ENCODE measurements at regions of chr14 and their contacts with region 1.

Region 1: GRCh38 chr14:54347997-54348611 is 48.7 kb upstream of the CDKN3 start:
- DNase-seq: peak; percentile 63
- CTCF ChIP-seq: peak; percentile 64

Region 2: GRCh38 chr14:53295985-53296582 is 1052.0 kb before region 1 on chr14:
- CTCF ChIA-PET with region 1: interaction called, 19 read pairs
- POLR2A ChIA-PET with region 1: no interaction called
- DNase-seq: peak; percentile 26
- CTCF ChIP-seq: peak; percentile 40

Region 3: GRCh38 chr14:53539489-53540126 is 808.5 kb before region 1 on chr14:
- CTCF ChIA-PET with region 1: interaction called, 28 read pairs
- POLR2A ChIA-PET with region 1: no interaction called
- DNase-seq: peak; percentile 51
- CTCF ChIP-seq: peak; percentile 93

Region 4: GRCh38 chr14:54175298-54175942 is 172.7 kb before region 1 on chr14:
- CTCF ChIA-PET with region 1: interaction called, 10 read pairs
- POLR2A ChIA-PET with region 1: no interaction called
- DNase-seq: peak; percentile 46
- CTCF ChIP-seq: peak; percentile 69

Region 5: DNA sequence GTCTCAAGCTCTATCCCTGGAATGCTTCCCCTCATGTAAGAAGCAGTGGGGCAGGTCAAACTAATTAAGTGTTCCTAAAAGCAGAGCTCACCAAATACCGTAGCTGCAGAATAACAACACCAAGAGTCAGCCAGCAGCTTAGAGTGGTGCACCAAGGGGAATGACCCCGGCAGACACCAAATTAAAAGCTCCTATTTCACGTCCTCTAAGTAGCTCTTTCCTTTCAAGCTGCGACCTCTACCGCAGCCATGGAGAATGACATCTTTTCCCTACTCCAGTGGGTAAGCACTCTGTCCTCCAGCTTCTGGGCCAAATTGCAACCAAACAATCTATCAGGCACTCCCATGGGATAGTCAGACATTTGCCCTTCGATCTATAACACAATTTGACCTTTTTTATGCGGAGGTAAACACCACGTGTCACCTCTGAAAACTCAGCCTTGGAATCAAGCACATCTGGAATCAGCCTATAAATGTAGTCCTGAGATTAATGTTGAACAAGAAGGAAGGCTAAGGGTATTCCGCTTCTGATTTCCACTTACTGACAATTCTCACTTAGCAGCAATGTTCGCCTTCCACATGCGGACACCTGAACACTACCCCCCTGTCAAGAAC is 18.9 kb before region 1 on chr14:
- CTCF ChIA-PET with region 1: interaction called, 22 read pairs
- POLR2A ChIA-PET with region 1: no interaction called
- DNase-seq: peak; percentile 50
- CTCF ChIP-seq: peak; percentile 80

Region 6: DNA sequence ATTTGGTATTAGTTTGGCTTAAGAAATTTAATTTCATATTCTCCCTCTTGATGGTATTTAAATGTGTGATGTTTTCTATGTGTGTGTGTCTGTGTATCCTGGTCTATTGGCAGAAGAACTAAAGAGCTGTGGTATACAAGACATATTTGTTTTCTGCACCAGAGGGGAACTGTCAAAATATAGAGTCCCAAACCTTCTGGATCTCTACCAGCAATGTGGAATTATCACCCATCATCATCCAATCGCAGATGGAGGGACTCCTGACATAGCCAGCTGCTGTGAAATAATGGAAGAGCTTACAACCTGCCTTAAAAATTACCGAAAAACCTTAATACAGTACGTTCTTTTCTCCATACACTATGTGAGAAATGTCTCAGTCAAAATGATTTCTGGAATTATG is 63.3 kb after region 1 on chr14:
- CTCF ChIA-PET with region 1: no interaction called
- POLR2A ChIA-PET with region 1: no interaction called
- DNase-seq: no peak
- CTCF ChIP-seq: no peak